ENCODE measurements at regions of chr9 and their contacts with region 1.

Region 1: DNA sequence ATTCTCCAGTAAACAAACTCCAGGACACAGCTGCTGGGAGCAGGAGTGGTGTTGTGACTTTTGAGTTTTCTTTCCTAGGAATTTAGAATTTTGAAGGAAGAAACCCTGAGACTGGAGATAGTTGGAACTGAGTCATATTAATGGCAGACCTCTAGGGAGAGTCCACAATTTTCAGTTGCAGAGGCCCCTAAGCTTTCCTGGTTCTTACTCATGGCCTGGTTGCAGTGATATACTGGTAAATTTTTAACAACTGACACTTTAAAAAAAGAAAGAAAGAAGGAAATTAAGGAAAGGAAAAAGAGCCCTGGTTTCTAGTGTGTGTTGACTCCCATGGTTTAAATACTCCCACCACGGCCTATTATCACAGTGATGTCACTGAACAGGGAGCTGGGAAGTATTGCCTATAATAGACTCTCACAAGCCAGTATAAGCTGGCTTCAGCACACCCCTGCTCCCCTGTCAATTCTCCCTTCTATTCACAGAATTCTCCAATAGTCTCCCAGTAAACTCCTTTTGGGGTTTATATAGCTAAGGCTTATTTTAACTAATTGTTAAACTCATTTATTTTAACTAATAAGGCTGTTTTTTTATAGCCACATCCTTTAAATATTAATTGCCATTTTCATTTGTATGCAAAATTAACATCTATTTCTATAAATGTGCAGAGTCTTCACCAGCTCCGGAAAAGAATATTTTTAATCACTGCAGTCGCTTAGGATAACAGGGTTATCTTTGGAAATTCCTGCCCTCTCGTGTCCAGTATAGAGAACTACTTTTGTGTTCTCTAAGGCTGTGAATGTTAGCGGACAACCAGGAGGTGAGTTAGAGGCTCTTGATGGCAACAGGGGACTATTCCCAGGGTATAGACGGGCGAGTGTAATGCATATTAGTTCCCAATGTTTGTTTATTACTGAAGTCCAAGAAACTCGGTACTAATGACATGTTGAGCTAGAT is 59.7 kb downstream of the GGTA1 start:
- DNase-seq: no peak
- ATAC-seq: no peak

Region 2: DNA sequence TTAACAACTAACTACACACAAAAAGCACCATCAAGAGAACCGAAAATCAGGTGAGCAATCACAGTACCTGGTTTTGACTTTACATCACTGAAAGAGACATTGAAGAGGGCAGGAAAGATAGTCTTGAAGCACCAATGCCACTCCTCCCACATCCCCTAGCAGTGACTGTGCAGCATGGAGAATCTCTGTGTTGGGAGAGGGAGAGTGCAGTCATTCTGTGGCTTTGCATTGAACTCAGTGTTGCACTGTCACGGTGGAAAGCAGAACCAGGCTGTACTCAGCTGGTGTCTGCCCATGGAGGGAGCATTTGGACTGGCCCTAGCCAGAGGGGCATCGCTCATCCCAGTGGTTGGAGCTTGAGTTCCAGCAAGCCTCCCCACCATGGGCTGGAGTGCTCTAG is 430.3 kb before region 1 on chr9:
- intact Hi-C with region 1: no loop called
- DNase-seq: no peak
- ATAC-seq: no peak

Region 3: GRCh38 chr9:121698627-121699570 is 258.9 kb after region 1 on chr9:
- intact Hi-C with region 1: no loop called
- DNase-seq: peak in 1 of 2 donors; percentile 73
- ATAC-seq: peak; percentile 53

Region 4: GRCh38 chr9:122005597-122005996 is 565.6 kb after region 1 on chr9:
- intact Hi-C with region 1: loop called in 1 of 2 experiments (anchors 10 kb)
- DNase-seq: no peak
- ATAC-seq: peak; percentile 92

Region 5: GRCh38 chr9:122418016-122418415 is 978.0 kb after region 1 on chr9:
- intact Hi-C with region 1: no loop called
- DNase-seq: no peak
- ATAC-seq: no peak

Measured in left colon (tissue), 2 donors.